ENCODE measurements at regions of chr1 and their contacts with region 1.

Region 1: DNA sequence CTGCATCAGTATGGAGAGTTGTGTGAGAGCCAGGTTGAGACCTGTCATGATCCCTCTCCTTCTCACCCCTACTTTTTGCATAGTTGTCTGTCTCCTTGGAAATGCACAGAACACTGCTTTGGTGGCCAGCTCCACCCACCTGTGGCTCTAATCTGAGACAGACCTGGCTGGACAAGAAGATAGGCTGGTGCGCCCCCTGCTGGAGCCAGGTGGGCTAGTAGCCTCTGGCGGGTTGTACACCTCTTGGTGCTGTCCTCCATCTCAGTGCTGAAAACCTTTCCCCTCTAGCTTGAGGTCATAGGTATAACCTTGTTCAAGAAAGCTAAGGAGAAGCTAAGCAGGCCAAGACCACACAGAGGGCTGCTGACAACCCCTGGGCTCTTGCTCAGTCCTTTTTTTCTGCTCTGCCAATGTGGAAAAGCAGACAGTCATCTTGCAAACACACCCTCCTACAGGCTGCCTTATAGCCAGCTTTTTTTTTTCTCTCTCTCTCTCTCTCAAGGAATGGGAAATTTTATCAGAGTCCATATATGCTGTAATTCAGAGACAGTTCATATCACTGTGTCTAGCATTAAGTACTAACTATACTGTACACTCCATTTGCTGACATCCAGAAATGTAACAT is 58.8 kb upstream of the SPATA6 start:
- DNase-seq: peak; percentile 85 to 97
- H3K4me3 ChIP-seq: no peak overlapping the region
- H3K27ac ChIP-seq: no peak overlapping the region
- H3K4me1 ChIP-seq: peaks cover 0 to 4% (median under 1%) of the 10 kb centered on the region in 4 experiments; a peak in 3 of 7 replicates
- H3K27me3 ChIP-seq: no peaks in the 10 kb centered on the region
- CTCF ChIP-seq: peak; percentile 93 to 99 (median 98)
- EP300 ChIP-seq: no peak
- POLR2A ChIP-seq: no peak
- RAD21 ChIP-seq: peak; percentile 90

Region 2: DNA sequence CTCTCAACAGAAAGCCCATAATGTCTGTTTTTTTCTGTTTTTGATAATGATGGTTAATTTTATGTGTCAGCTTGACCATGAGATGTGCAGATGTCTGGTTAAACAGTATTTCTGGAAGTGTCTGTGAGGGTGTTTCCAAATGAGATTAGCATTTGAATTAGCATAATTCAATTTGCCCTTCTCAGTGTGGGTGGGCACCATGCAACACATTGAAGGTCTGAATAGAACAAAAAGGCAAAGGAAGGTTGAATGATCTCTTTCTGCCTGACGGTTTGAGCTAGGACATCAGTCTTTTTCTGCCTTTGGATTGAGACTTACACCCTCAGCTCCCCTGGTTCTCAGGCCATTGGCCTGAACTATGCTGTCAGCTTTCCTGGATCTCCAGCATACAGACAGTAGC is 24.0 kb before region 1 on chr1:
- CTCF ChIA-PET with region 1: interaction called, 10 read pairs
- POLR2A ChIA-PET with region 1: no interaction called
- DNase-seq: no peak
- H3K4me3 ChIP-seq: no peak overlapping the region
- H3K27ac ChIP-seq: no peak overlapping the region
- H3K4me1 ChIP-seq: no peaks in the 10 kb centered on the region
- H3K27me3 ChIP-seq: no peaks in the 10 kb centered on the region
- CTCF ChIP-seq: no peak
- EP300 ChIP-seq: no peak
- POLR2A ChIP-seq: no peak
- RAD21 ChIP-seq: no peak

Region 3: DNA sequence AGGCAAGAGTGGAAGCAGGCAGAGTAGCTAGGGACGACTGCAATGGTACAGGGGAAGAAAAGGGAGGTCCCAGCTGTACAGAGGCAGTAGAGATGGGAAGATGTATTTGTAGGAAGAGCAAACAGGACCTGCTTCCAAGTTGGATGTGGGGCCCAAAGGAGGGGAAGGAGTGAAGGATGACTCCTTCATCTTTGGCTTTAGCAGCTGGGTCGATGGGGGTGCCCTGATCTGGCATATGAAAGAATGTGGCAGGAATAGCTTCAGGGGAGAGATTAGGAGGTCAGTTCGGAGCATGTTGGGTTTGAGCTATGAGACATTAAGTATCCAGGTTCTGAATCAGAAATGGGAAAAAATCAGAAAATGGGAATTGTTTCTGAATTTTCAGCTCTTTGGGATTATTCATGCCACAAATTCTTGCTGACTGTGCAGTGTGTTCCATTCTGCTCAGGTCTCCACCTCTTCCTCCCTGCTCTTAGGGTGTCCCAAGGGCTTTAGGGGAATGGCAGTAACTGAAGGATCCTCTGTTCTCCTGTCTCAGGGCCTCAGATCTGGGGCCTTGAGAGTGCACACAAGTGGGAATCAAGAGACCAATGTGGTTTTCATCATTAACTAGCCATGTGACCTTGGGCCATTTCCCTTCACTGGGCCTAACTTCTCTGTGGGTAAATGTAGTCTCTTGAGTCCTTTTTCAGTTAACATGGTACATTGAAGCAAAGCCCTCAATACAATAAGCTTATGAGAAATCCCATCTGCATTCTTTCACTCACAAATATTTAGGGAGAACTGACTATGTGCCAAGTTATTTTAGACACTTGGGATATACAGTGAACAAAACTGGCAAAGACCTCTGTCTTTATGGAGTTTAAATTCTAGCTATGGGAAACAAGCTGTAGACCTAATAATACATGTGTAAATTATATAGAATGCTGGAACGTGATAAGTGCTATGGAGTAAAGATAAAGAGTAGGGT is 16.7 kb after region 1 on chr1:
- CTCF ChIA-PET with region 1: interaction called, 20 read pairs
- POLR2A ChIA-PET with region 1: no interaction called
- DNase-seq: no peak
- H3K4me3 ChIP-seq: no peak overlapping the region
- H3K27ac ChIP-seq: no peak overlapping the region
- H3K4me1 ChIP-seq: peaks cover 0 to 5% (median 1%) of the 10 kb centered on the region in 4 experiments; a peak in 1 of 7 replicates
- H3K27me3 ChIP-seq: 0 out of 7 replicates have a peak, but pooled peaks cover 0 to 2% (median 0%) of the 10 kb centered on the region in 4 experiments
- CTCF ChIP-seq: no peak
- EP300 ChIP-seq: no peak
- POLR2A ChIP-seq: no peak
- RAD21 ChIP-seq: no peak

Measured in H1 (cell line).